ENCODE measurements at regions of chr12 and their contacts with region 1.

Region 1: GRCh38 chr12:20109676-20110075 is 258.7 kb upstream of the PDE3A start:
- DNase-seq: no peak
- ATAC-seq: no peak
- H3K4me3 ChIP-seq: no peak overlapping the region
- H3K4me3 Mint-ChIP-seq: no peak overlapping the region
- H3K27ac ChIP-seq: no peak overlapping the region
- H3K27ac Mint-ChIP-seq: no peak overlapping the region
- H3K4me1 ChIP-seq: no peaks in the 10 kb centered on the region
- H3K4me1 Mint-ChIP-seq: no peaks in the 10 kb centered on the region
- H3K27me3 ChIP-seq: no peaks in the 10 kb centered on the region
- H3K27me3 Mint-ChIP-seq: no peaks in the 10 kb centered on the region

Region 2: DNA sequence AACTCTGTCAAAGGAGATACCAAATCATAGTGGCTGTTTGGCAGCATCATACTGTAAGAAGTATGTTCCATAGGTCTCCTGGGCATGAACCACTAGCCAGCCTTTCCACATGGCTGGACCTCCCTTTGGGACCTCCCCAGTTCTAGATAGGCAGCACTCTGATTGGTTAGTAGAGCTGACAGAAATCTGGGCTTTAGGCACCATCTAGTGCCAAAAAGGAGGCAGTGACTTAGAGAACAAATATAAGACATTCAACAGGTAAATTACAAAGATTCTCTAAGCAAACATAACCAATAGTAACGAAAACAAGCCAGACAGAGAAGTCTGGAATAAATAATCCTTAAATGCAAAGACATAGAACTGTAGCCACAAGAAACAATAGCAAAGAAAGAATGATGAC is 110.7 kb after region 1 on chr12:
- CTCF ChIA-PET with region 1: no interaction called
- POLR2A ChIA-PET with region 1: interaction called in 1 of 2 experiments, 11 read pairs
- DNase-seq: no peak
- ATAC-seq: no peak
- H3K4me3 ChIP-seq: no peak overlapping the region
- H3K4me3 Mint-ChIP-seq: no peak overlapping the region
- H3K27ac ChIP-seq: no peak overlapping the region
- H3K27ac Mint-ChIP-seq: no peak overlapping the region
- H3K4me1 ChIP-seq: no peaks in the 10 kb centered on the region
- H3K4me1 Mint-ChIP-seq: no peaks in the 10 kb centered on the region
- H3K27me3 ChIP-seq: no peaks in the 10 kb centered on the region
- H3K27me3 Mint-ChIP-seq: no peaks in the 10 kb centered on the region